Heart right ventricle (tissue), 16 donors: ENCODE measurements at regions of chr11 and their contacts with region 1.

Region 1: DNA sequence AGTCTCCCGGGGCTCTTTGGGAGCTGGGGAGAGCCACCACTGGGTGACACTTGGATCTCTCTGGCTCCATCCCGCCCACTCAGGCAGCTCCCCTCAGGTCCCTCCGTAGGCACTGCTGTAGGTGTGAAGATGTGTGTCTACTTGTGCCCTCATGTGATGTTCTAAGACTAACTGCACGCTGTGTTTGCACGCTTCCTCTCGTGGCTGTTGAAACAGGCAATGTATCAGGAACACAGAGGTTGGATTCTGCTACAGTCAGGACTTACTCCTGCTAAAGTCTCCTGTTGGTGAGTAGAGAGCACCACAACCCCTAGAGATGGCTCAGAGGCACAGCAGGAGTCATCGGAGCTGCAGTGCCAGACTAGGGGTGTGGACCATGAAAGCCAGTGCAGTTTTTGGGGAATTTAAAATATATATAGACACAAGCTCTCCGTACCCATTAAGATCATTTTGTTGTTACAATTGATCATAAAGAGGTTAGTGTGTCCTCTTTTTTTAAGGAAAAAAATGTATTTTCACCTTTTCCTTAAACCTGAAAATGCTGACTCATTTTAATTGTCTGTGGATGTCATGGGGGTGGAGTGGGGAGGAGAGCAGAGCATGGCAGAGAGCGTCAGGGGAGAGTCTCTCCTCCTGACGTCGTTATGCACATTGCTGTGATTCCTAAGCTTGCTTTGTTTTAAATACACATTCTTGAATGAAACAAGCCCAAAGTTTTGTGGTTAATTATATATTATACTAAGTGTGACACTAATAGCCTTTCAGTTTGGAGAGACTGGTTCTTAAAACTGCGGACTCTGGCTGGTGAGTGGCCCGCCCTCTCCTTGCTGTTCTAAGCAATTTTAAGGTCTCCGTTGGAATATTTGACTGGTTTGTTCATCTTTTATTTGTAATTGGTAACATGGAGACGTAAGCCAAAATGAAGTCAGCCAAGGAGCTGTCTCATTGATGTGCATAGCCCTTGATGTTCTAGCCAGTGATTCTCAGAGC is 16.2 kb upstream of the CTTN start:
- DNase-seq: no peak
- ATAC-seq: peak in 1 of 8 donors; percentile 11
- H3K4me3 ChIP-seq: no peak overlapping the region
- H3K27ac ChIP-seq: no peak overlapping the region
- H3K4me1 ChIP-seq: no peaks in the 10 kb centered on the region
- H3K27me3 ChIP-seq: no peaks in the 10 kb centered on the region
- CTCF ChIP-seq: no peak

Region 2: GRCh38 chr11:70128435-70128906 is 253.7 kb before region 1 on chr11:
- intact Hi-C with region 1: no loop called
- DNase-seq: no peak
- ATAC-seq: peak in 1 of 8 donors; percentile 20
- H3K4me3 ChIP-seq: no peak overlapping the region
- H3K27ac ChIP-seq: peak overlapping the region in 1 of 10 donors; percentile 22
- H3K4me1 ChIP-seq: peaks cover 0 to 8% (median 0%) of the 10 kb centered on the region in 9 donors
- H3K27me3 ChIP-seq: no peaks in the 10 kb centered on the region
- CTCF ChIP-seq: no peak

Region 3: GRCh38 chr11:70423523-70424505 is 41.6 kb after region 1 on chr11:
- intact Hi-C with region 1: loop called in 1 of 10 experiments (anchors 2 kb)
- DNase-seq: no peak
- ATAC-seq: peak in 3 of 8 donors; percentile 8 to 24 (median 9)
- H3K4me3 ChIP-seq: no peak overlapping the region
- H3K27ac ChIP-seq: no peak overlapping the region
- H3K4me1 ChIP-seq: peaks cover 0 to 4% (median 0%) of the 10 kb centered on the region in 9 donors
- H3K27me3 ChIP-seq: peaks cover 0 to 46% (median 0%) of the 10 kb centered on the region in 7 donors
- CTCF ChIP-seq: no peak